Activated CD4-positive, alpha-beta T cell treated with anti-CD3 and anti-CD28 coated beads, Interleukin-2, amount 10 ng/mL, durations not matched to agents 7 days and 5 days (primary cell): ENCODE measurements at regions of chr20 and their contacts with region 1.

Region 1: GRCh38 chr20:18543932-18544331 is 23.3 kb upstream of the SMIM26 start:
- DNase-seq: no peak
- H3K4me3 Mint-ChIP-seq: no peak overlapping the region
- H3K27ac Mint-ChIP-seq: no peak overlapping the region
- H3K4me1 Mint-ChIP-seq: no peaks in the 10 kb centered on the region
- H3K27me3 Mint-ChIP-seq: no peaks in the 10 kb centered on the region

Region 2: DNA sequence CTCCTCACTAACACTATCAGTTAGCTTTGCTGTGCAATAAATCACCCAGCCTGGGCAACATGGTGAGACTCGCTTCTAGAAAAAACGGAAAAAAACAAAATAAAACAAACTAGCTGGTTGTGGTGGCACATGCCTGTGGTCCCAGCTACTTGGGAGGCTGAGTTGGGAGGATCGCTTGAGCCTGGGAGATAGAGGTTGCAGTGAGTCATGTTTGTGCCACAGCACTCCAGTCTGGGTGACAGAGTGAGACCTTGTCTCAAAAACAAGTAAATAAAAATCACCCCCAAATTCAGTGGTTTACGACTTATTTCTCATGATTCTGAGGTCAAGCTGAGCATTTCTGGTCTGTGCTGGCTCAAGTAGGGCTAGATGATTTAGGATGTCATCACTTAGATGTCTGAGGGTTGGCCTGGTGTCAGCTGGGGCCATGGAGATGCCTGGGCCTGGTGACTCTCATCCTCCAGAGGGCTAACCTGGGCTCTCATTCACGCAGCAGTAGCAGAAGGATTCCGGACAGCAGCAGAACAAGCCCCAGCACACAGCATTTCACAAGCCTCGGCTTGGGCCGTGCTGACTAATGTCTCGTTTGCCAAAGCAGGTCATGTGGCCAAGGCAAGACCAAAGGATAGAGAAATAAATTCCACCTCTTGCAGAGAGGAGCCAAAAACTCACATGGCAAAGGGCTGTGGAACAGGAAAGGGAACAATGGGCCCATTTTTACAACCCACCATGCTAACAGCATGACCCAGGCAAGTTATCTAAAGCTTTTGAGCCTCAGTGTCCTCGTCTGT is 542.6 kb before region 1 on chr20:
- CTCF ChIA-PET with region 1: no interaction called
- POLR2A ChIA-PET with region 1: interaction called, 11 read pairs
- DNase-seq: no peak
- H3K4me3 Mint-ChIP-seq: no peak overlapping the region
- H3K27ac Mint-ChIP-seq: no peak overlapping the region
- H3K4me1 Mint-ChIP-seq: peaks cover 8% of the 10 kb centered on the region
- H3K27me3 Mint-ChIP-seq: peaks cover 2% of the 10 kb centered on the region